Activated B cell treated with CpG ODN at 0.5 μM for 24 hours (primary cell): ENCODE measurements at regions of chr3 and their contacts with region 1.

Region 1: DNA sequence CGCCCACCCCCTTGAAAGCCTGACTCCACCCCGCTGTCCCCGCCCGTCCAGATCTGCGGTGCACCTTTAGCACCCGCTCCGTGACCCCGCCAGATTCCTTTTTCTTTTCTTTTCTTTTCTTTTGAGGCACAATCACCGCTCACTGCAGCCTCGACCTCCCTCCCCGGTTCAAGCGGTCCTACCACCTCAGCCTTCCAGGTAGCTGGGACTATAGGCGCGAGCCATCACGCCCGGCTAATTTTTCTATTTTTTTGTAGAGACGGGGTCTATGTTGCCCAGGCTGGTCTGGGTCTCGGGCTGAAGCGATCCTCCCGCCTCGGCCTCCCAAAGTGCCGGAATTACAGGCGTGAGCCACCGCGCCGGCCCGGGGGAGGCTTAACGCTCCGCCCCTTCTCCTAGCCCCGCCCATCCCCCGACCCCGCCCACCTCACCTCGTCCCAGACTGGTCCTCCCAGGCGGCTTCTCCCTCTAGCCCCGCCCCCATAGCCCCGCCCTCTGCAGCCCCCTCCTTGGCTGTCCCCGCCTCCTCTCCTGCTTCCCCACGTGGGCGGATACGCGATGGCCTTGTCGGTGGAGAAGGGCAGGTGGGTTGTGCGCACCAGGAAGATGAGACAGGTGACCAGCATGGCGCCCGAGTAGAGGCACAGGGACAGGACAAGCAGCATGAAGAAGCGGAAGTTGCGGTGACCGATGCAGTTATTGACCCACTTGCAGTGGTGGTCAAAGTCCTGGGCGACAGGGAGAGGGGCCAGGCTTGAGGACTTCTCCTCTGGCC is 3.2 kb downstream of the ZDHHC19 start:
- DNase-seq: no peak
- ATAC-seq: peak; percentile 74
- H3K4me3 Mint-ChIP-seq: peak overlapping the region; percentile 85
- H3K27ac Mint-ChIP-seq: peak overlapping the region; percentile 76
- H3K4me1 Mint-ChIP-seq: peaks cover 43% of the 10 kb centered on the region
- H3K27me3 Mint-ChIP-seq: no peaks in the 10 kb centered on the region
- CTCF ChIP-seq: no peak

Region 2: GRCh38 chr3:195690951-195691490 is 517.0 kb before region 1 on chr3:
- CTCF ChIA-PET with region 1: no interaction called
- POLR2A ChIA-PET with region 1: interaction called, 13 read pairs
- intact Hi-C with region 1: no loop called
- DNase-seq: peak; percentile 12
- ATAC-seq: no peak
- H3K4me3 Mint-ChIP-seq: no peak overlapping the region
- H3K27ac Mint-ChIP-seq: no peak overlapping the region
- H3K4me1 Mint-ChIP-seq: peaks cover 3% of the 10 kb centered on the region
- H3K27me3 Mint-ChIP-seq: no peaks in the 10 kb centered on the region
- CTCF ChIP-seq: no peak

Region 3: DNA sequence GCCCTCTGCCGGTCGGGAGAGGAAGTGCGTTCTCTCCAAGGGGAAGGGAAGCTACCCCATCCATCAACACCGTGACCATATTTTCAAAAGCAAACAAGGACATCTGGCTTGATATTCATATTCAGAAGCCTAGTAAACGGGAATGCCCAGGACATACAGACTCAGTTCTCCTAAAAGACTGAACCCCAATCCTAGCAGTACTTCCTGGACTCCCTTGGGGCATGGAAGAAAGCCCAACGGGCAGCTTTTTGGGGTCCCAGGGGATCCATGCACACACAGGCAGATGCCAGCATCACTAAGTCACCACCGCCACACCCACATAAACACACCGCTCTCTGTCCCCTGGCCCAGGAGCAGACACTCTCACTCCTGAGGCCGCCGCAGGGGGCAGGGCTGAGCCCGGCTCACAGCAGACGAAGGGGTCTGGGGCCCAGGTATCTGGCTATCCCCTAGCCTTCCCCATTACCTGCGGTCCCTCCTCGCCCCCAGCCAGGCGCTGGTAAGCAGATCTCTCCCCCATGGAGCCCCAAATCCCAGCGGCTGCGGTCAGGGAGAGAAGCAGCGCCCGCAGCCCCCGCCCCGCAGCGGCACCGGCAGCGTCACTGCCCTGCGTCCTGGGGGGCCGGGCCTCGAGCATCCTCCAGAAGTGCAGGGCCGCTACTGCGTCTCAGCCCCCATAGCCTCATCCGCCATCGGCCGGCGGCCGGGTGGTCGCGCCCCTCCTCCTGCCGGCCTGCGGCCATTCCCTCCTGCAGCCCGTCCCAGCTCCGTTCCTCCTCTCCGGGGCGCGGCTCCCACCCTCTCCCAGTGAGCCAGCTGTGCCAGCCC is 313.0 kb before region 1 on chr3:
- CTCF ChIA-PET with region 1: no interaction called
- POLR2A ChIA-PET with region 1: no interaction called
- intact Hi-C with region 1: no loop called
- DNase-seq: peak; percentile 72
- ATAC-seq: peak; percentile 72
- H3K4me3 Mint-ChIP-seq: peak overlapping the region; percentile 88
- H3K27ac Mint-ChIP-seq: peak overlapping the region; percentile 88
- H3K4me1 Mint-ChIP-seq: peaks cover 57% of the 10 kb centered on the region
- H3K27me3 Mint-ChIP-seq: no peaks in the 10 kb centered on the region
- CTCF ChIP-seq: peak; percentile 60